ENCODE measurements at regions of chr6 and their contacts with region 1.

Region 1: GRCh38 chr6:169529931-169530751 is 171.7 kb downstream of the WDR27 start:
- DNase-seq: peak; percentile 77
- H3K4me3 Mint-ChIP-seq: peak overlapping the region; percentile 31
- H3K27ac Mint-ChIP-seq: peak overlapping the region; percentile 41
- H3K4me1 Mint-ChIP-seq: peaks cover 15% of the 10 kb centered on the region
- H3K27me3 Mint-ChIP-seq: peaks cover 5% of the 10 kb centered on the region

Region 2: DNA sequence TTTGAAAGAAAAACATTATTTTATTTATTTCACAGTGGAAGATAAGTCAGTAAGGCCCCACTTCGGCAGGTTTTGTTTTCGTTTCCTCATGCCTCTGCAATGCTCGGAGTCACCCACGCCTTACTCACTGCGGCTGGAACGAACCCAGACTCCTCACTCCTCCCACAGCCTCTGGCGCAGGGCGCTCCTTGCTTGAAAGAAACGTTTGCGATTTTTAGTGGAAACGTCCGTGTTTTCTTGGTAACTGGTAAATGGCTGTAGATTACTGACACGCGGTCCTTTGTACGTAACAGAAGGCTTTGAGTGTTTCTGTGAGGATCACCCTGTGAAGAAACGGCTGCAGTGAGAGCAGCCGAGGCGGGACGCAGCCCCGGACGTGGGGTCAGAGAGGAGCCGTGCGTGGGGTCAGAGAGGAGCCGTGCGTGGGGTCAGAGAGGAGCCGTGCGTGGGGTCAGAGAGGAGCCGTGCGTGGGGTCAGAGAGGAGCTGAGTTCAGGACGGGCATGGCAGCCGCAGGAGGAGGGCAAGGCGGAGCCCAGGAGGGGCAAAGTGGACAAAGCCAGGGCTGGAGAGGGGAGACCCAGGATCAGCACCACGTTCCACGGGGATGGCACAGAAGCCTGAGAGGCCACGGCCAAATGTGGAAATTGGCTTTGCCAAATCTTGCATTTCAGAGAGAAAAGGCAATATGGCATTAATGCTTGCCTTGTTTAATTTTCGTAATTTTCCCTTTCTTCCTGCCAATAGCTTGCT is 77.8 kb before region 1 on chr6:
- intact Hi-C with region 1: no loop called
- DNase-seq: no peak
- H3K4me3 Mint-ChIP-seq: no peak overlapping the region
- H3K27ac Mint-ChIP-seq: no peak overlapping the region
- H3K4me1 Mint-ChIP-seq: no peaks in the 10 kb centered on the region
- H3K27me3 Mint-ChIP-seq: no peaks in the 10 kb centered on the region

Region 3: DNA sequence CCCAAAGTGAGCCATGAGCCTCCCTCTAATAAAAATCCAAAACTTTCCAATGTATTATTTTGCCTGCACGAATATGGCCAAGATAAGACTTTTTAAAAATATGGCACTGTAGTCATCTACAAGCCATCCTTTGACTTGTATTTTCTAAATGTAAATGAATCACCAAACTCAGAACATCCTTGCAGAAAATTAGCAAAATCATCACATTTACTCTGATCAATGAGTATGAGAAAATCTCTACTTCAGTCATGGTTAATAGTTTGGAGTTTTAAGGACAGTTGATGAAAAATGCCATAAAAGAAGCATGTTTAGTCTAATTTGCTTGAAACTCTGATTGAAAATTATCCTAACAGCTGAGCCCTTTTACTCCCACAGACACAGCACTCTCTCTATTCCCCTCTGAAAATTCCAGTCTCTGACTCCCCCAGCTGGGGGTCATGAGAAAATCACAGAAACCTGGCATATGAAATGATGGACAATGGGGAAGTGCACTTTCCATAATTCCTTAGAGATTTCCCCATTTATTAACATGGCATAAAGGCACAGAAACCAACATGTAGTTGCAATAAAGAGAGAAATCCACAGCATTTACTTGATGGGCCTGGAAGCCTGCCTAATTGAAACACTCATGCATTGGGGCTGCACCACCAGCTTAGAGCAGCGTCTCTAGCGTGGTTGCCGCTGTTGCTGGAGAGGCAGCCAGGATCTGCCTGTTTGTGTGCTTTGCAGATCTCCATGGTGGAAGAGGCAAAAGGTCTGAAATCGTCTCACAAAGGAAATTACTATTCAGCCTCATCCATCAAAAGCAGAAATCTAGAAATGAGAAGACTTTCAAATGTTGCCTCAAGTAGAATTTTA is 42.3 kb before region 1 on chr6:
- intact Hi-C with region 1: no loop called
- DNase-seq: no peak
- H3K4me3 Mint-ChIP-seq: no peak overlapping the region
- H3K27ac Mint-ChIP-seq: no peak overlapping the region
- H3K4me1 Mint-ChIP-seq: no peaks in the 10 kb centered on the region
- H3K27me3 Mint-ChIP-seq: no peaks in the 10 kb centered on the region

Region 4: DNA sequence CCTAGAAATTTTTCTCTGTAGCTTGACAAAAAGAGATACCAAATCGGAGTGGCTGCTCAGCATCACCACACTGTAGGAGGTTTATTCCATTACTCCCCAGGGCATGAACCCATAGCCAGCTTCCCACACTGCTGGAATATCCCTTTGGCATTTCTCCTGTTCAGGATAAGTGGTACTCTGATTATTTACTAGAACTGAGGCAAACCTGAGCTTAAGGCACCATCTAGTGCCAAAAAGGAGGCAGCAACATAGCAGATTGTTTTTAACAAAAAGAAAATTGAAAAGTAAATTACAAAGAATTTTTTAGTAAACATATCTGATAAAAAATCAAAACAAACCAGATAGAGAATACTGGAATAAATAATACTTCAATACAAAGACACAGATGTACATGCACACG is 10.0 kb before region 1 on chr6:
- intact Hi-C with region 1: no loop called
- DNase-seq: no peak
- H3K4me3 Mint-ChIP-seq: no peak overlapping the region
- H3K27ac Mint-ChIP-seq: no peak overlapping the region
- H3K4me1 Mint-ChIP-seq: no peaks in the 10 kb centered on the region
- H3K27me3 Mint-ChIP-seq: peaks cover 16% of the 10 kb centered on the region

Region 5: DNA sequence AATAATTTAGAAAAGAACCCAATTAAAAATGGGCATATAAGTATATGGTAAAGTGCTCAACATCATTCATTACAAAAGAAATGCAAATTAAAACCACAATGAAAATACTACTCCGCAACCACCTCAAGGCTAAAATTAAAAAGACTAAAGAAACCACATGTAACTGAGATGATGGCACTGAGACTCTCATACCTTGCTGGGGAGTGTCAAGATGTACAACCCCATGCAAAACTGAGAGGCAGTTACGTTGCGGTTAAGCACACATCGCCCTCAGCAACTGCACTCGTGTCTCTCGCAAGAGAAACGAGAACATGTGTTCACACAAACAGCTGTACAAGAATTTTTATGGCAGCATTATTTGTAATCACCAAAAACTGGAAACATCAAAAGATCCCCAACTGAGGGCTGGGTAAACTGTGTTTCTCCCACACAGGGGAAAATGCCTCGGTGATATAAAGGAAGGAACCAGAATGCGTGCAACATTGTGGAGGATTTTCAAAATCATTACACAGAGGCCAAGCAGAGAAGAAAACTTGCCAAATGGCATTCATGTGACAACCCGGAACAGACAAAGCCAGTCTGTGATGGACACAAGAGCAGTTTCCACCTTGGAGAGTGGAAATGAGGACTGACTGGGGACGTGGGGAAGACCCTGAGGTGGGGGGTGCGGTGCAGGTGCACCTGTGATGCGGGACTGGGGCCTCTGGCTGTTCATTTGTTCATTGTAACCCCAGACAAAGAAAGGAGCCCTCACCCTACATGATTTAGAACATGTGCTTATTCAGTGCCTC is 26.8 kb after region 1 on chr6:
- intact Hi-C with region 1: loop called (anchors 1 kb)
- DNase-seq: peak; percentile 74
- H3K4me3 Mint-ChIP-seq: peak overlapping the region; percentile 39
- H3K27ac Mint-ChIP-seq: peak overlapping the region; percentile 22
- H3K4me1 Mint-ChIP-seq: peaks cover 11% of the 10 kb centered on the region
- H3K27me3 Mint-ChIP-seq: peaks cover 26% of the 10 kb centered on the region

Region 6: DNA sequence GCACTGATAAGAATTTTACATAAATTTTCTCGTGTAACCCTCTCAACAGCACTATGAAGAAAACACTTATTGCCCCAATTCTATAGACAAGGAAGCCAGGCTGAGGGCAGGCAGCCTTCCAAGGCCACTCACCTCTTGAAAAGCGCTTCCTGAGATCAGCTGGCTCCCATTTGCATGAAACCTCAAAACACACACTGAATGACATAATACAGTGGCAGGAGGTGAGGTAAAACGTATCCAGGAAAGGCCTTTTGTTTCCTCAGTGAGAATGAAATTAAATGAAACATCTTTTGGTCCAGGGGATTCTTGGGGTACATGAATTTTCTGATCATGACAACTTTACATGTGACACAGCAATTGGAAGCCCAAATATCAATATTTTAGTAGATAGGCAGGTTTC is 59.2 kb after region 1 on chr6:
- intact Hi-C with region 1: loop called (anchors 1 kb)
- DNase-seq: peak; percentile 71
- H3K4me3 Mint-ChIP-seq: no peak overlapping the region
- H3K27ac Mint-ChIP-seq: peak overlapping the region; percentile 35
- H3K4me1 Mint-ChIP-seq: peaks cover 16% of the 10 kb centered on the region
- H3K27me3 Mint-ChIP-seq: no peaks in the 10 kb centered on the region